ENCODE measurements at regions of chr16 and their contacts with region 1.

Region 1: GRCh38 chr16:11586856-11587642 is at the start of gene LITAF:
- DNase-seq: peak; percentile 90
- CTCF ChIP-seq: peak; percentile 13

Region 2: GRCh38 chr16:11535471-11535870 is 51.6 kb before region 1 on chr16:
- CTCF ChIA-PET with region 1: interaction called, 10 read pairs
- POLR2A ChIA-PET with region 1: interaction called, 3 read pairs
- DNase-seq: no peak
- CTCF ChIP-seq: no peak

Region 3: DNA sequence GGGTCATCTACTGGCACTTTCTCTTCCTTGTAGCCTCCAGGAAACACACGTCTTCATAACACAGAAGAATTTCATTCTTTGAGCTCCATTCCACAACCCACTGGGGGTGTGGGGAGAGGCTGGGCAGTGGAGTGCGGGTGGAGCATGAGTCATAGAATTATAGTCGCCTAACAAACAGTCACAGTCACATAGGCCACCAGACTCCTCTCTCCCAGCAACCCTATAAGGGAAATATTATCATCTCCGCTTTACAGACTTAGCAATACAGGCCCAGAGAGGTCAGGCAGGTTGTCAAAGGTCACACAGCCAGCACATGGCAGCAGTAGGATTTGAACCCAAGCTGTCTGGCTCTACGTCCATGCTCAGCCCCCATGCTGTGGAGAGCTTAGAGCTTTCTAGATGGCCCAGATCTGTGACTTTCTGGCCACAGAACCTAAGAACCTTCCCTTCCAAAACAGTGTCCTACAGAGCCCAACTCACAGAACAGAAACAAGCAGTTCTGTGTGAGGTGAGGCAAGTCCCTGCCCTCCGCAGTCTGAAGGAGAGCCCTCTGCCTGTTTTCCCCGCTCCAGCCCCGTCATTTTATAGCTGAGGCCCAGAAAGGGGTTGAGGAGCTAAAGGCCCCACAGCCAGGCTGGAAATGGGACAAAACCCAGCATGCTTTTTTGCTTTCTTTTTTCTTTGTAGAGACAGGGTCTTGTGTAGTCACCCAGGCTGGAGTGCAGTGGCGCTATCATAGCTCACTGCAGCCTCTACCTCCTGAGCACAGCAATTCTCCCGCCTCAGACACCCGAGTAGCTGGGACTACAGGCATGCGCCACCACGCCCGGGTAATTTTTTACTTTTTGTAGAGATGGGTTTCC is 10.4 kb after region 1 on chr16:
- CTCF ChIA-PET with region 1: interaction called, 10 read pairs
- POLR2A ChIA-PET with region 1: interaction called, 5 read pairs
- DNase-seq: no peak
- CTCF ChIP-seq: no peak

Region 4: DNA sequence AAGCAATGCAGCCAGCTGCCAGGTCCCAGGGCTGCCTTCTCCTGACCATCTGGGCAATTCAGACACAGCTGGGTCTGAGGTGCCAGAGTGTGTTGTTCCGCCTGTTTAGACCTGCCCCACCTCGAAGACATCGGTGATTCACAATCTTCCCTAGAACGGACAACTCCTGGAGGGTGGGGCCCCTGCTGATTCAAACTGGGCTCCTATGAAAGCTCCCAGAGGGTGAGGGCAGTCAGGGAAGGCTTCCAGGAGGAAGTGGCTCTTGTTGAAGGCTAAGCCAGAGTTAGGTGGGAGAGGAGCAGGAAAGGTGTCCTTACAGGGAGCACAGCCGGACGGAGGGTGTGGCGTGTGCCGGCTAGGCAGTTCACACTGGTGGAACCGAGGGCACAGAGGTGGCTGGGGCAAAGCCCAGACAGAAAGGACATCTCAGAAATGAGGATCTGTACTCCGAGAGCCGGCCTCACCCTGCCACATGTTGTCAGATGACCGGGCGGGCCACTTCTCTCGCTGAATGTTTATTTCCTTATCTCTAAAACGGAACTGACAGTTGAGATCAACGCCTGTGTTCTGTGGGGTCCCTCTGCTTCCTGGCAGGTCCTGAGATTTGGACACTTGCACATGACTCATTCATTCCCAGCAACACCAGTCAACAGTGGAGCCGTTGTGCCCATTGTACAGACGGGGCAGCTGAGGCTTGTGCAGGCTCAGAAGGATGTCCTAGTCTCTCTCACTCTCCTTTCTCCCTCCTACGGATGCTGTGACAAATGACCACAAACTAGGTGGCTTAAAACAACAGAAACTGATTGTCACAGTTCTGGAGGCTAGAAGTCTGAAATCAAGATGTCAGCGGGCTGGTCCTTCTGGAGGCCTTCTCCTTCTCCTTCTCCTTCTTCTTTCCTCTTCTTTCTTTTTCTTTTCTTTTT is 26.6 kb after region 1 on chr16:
- CTCF ChIA-PET with region 1: no interaction called
- POLR2A ChIA-PET with region 1: interaction called, 12 read pairs
- DNase-seq: peak; percentile 62
- CTCF ChIP-seq: no peak

Measured in GM10248 (cell line).